ENCODE measurements at regions of chr1 and their contacts with region 1.

Region 1: DNA sequence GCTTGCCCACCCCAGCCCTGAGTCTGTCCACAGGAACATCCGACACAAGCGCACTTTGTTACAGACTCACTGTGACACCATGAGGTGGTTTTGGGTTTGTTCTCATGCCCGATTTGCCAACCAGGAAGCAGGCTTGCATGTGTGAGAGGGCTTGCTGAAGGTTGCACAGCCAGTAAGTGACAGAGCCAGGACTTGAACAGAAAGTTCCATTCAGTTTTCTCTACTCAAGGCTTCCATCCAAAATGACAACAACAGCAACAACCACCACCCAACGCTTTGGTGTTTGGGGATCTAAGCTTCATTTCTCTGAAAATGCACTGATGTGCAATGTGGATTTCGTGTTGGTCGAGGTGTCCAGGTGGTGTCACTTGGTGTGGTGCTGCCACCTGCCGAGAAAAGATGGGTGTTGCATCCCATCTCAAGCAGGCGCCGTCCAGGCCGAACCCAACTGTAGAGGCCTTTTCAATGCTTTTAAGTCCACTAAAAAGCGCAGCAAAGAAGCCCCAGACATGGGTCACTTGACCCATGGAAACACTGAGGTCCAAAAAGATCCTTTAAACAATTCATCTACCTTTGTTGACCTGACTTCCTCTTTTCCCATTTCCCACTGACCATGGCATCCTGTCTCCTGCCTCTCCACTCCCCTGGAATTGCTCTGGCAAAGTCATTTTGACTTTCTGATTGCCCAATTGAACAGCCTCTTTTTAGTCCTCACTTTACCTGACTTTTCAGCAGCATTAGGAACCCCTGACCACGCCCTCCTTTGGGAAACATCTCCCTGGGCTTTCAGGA is 12.2 kb downstream of the CITED4 start:
- DNase-seq: peak; percentile 86
- H3K4me3 Mint-ChIP-seq: no peak overlapping the region
- H3K27ac Mint-ChIP-seq: no peak overlapping the region
- H3K4me1 Mint-ChIP-seq: peaks cover 8% of the 10 kb centered on the region
- H3K27me3 Mint-ChIP-seq: no peaks in the 10 kb centered on the region

Region 2: GRCh38 chr1:40531381-40532061 is 318.5 kb before region 1 on chr1 and contains the start of gene ZNF684:
- CTCF ChIA-PET with region 1: interaction called, 6 read pairs
- POLR2A ChIA-PET with region 1: no interaction called
- intact Hi-C with region 1: loop called (anchors 1 kb)
- DNase-seq: peak; percentile 92
- H3K4me3 Mint-ChIP-seq: peak within 1 kb of the TSS; percentile 96
- H3K27ac Mint-ChIP-seq: peak within 1 kb of the TSS; percentile 84
- H3K4me1 Mint-ChIP-seq: peaks cover 19% of the 10 kb centered on the region
- H3K27me3 Mint-ChIP-seq: peaks cover 2% of the 10 kb centered on the region
- total RNA-seq, gene ZNF684: 4.8 to 5.9 TPM

Region 3: DNA sequence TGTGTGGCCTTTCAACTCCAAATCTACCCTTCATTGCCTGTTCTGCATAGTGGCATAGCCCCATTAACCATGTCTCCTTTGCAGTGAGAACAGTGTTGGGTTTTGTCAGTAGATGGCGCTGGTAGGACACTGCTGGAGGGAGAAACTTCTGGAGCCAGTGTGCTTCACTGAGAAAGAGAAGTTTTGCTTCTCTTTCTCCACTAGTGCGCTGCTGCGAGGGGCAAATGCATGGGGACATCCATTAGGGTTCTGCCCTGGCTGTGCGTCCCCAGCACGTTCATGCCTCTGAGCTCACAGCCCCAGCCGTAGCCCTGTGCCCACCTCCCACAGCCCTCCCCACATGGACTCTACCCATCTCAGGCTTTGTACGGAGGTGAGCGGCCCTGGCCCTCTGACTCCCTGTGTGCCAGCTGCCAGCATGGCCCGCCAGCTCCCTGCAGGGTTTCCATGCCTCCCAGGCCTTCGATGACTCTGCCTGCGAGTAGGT is 237.6 kb before region 1 on chr1:
- CTCF ChIA-PET with region 1: interaction called, 7 read pairs
- POLR2A ChIA-PET with region 1: no interaction called
- intact Hi-C with region 1: loop called (anchors 1 kb)
- DNase-seq: peak; percentile 79
- H3K4me3 Mint-ChIP-seq: no peak overlapping the region
- H3K27ac Mint-ChIP-seq: no peak overlapping the region
- H3K4me1 Mint-ChIP-seq: no peaks in the 10 kb centered on the region
- H3K27me3 Mint-ChIP-seq: no peaks in the 10 kb centered on the region

Region 4: GRCh38 chr1:40668769-40669525 is 181.1 kb before region 1 on chr1:
- CTCF ChIA-PET with region 1: no interaction called
- POLR2A ChIA-PET with region 1: no interaction called
- intact Hi-C with region 1: loop called (anchors 5 kb)
- DNase-seq: peak; percentile 91
- H3K4me3 Mint-ChIP-seq: peak overlapping the region; percentile 41
- H3K27ac Mint-ChIP-seq: no peak overlapping the region
- H3K4me1 Mint-ChIP-seq: peaks cover 7% of the 10 kb centered on the region
- H3K27me3 Mint-ChIP-seq: no peaks in the 10 kb centered on the region

Region 5: DNA sequence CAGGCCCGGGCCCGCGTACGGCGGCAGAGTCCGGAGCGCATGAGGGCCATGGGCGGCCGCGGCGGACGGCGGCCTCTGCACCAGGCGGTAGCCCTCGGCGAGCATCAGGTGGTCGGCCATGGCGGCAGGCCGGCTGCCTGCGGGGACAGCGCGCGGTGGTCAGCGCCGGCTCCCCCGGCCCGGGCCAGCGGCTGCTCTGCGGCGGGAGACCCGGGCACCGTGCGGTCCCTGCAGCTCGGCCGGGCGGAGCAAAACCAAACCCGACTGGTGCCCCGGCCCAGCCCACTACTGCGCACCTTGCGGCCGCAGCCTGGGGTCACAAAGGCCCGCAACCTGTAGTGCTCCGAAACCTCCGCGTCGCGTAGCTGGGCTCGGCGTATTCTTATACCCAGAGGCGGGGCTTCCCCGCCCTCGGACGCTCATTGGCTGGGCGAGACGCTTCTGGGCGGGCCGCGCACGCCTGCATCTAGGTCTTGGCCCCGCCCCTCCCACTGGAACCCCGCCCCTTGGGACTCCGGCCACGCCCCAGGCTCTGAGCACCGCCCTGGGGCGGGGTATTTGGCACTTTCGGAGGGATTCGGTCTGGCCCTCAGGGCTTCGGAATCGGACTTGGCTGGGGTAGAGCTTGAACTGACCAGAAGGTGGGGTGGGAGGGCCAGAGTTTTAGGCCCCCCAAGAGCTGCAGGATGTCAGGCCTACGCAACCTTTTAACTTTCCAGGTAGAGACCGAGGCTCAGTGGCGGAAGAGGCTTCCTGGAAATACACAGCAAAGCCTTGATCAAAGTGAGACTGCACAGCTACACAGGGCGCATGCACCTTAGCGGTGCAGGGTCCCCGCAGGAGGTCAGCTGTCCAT is 12.2 kb after region 1 on chr1 and contains the start of gene CITED4:
- CTCF ChIA-PET with region 1: interaction called, 13 read pairs
- POLR2A ChIA-PET with region 1: no interaction called
- intact Hi-C with region 1: no loop called
- DNase-seq: peak; percentile 96
- H3K4me3 Mint-ChIP-seq: peak within 1 kb of the TSS; percentile 87
- H3K27ac Mint-ChIP-seq: peak within 1 kb of the TSS; percentile 97
- H3K4me1 Mint-ChIP-seq: peaks cover 10% of the 10 kb centered on the region
- H3K27me3 Mint-ChIP-seq: peaks cover 3% of the 10 kb centered on the region
- total RNA-seq, gene CITED4: 1.9 to 2.1 TPM

Region 6: DNA sequence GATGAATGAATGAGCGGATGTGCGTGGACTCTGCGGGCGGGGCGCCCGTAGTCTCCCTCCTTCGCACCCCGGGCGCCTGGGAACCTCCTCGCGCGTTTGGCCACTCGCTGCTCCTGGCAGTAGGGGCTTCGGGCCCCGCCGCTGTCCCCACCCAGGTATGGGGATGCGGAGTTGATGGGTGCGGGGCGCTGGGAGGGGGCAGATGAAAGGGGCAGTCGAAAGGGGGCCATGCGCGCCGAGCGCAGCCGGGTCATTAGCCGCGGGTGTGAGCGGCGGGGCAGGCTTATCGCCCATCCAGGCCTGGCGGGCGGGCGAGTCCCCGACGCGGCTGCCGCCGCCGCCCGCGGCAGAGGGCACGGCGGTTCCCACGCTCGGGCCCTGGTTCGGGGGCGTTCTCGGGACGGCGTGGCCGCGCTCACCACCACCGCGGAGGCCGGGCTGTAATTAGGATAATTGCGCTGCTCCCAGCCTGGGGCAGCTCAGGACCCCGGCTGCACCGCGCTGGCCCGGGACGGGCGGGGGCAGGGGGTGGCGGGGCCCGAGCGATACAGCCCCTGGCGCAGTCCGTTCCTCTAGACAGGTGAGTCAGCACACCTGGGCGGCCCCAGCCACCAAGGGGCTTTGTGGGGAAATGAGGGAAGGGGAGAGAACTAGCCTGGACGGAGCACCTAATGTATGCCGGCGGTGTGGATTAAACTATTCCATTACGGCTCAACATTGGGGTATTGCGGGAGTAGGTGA is 34.2 kb after region 1 on chr1:
- CTCF ChIA-PET with region 1: no interaction called
- POLR2A ChIA-PET with region 1: no interaction called
- intact Hi-C with region 1: no loop called
- DNase-seq: no peak
- H3K4me3 Mint-ChIP-seq: no peak overlapping the region
- H3K27ac Mint-ChIP-seq: no peak overlapping the region
- H3K4me1 Mint-ChIP-seq: peaks cover 3% of the 10 kb centered on the region
- H3K27me3 Mint-ChIP-seq: peaks cover 35% of the 10 kb centered on the region

Region 7: GRCh38 chr1:40901886-40902852 is 52.2 kb after region 1 on chr1:
- CTCF ChIA-PET with region 1: no interaction called
- POLR2A ChIA-PET with region 1: no interaction called
- intact Hi-C with region 1: no loop called
- DNase-seq: no peak
- H3K4me3 Mint-ChIP-seq: no peak overlapping the region
- H3K27ac Mint-ChIP-seq: no peak overlapping the region
- H3K4me1 Mint-ChIP-seq: no peaks in the 10 kb centered on the region
- H3K27me3 Mint-ChIP-seq: peaks cover 2% of the 10 kb centered on the region

Region 8: DNA sequence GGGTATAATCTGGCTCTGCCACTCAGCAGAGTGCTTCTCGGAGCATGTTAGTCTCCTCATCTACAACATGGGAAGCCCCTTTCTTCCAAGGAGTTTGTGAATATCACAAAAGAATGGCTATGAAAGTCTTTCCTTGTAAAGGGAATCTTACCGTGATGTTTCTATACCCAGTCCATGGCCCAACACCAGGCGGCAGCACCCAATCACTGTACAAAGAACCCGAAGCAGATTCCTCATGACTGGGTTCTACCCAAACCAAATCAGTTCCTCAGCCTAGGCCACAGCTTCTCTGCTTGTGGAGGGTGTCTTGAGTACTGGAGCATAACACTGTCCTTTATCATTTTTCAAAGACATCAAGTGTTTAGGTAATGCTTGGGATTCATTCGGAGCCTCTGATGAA is 188.1 kb after region 1 on chr1:
- CTCF ChIA-PET with region 1: no interaction called
- POLR2A ChIA-PET with region 1: no interaction called
- intact Hi-C with region 1: no loop called
- DNase-seq: no peak
- H3K4me3 Mint-ChIP-seq: no peak overlapping the region
- H3K27ac Mint-ChIP-seq: no peak overlapping the region
- H3K4me1 Mint-ChIP-seq: no peaks in the 10 kb centered on the region
- H3K27me3 Mint-ChIP-seq: no peaks in the 10 kb centered on the region